HAP-1 (cell line): ENCODE measurements at regions of chr11 and their contacts with region 1.

Region 1: DNA sequence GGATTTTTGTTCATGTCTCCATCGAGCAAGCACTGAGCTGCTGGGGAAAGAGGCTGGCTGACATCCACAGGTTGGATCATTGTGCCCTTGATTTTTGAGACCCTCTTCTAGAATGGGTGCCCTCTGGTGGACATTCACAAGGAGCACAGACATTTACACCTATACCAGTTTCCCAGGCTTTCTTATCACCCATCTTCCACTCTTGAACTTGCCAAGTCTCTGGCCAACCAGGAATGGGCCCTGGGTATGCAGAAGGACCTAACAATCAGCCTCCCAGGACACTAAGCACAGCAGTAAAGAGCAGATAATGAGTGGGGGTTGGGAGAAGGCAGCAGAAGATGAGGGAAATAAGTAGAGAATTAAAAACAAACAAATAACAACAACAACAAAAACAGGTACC is 5.7 kb upstream of the INTS4 start:
- DNase-seq: peak; percentile 68 to 82
- H3K4me3 ChIP-seq: no peak overlapping the region
- H3K4me1 ChIP-seq: peaks cover 3% of the 10 kb centered on the region
- H3K27me3 ChIP-seq: no peaks in the 10 kb centered on the region

Region 2: GRCh38 chr11:77776455-77776854 is 223.7 kb before region 1 on chr11:
- in situ Hi-C with region 1: loop called (anchors 10 kb)
- DNase-seq: peak in 1 of 2 experiments; percentile 28
- H3K4me3 ChIP-seq: no peak overlapping the region
- H3K4me1 ChIP-seq: no peaks in the 10 kb centered on the region; the same call in 1 of the 2 replicates
- H3K27me3 ChIP-seq: no peaks in the 10 kb centered on the region

Region 3: DNA sequence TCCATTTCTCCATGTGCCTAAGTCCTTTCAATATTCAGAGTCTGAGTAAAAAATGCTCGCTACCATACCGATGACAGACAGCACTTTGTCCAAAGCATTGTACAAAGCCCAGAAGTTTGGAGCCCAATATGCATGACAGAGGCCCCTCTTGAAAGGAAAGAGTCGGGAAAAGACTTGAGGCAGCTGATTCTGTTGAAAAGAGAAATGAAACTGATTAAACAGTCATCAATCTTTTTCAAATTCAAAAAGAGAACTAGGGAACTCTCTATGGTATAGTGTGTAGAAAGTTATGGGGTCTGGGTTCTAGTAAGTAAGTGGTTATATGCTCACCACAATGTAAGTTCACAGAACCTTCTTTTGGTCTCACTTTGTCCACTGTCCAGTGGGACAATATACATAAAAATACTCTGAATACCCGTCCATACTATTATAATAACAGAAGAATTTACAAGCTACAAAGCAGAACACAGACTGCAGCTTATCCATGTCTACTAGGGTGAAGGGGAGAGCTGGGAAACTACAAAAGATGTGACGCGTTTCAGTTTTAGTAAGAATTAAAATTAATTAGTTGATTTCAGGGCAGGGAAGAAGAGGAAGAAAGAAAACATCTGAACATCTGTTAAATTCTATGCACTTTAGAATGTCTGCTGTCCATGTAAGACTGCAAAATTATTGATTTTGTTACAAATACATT is 112.5 kb after region 1 on chr11:
- in situ Hi-C with region 1: no loop called
- DNase-seq: peak; percentile 82 to 100
- H3K4me3 ChIP-seq: no peak overlapping the region
- H3K4me1 ChIP-seq: peaks cover 37% of the 10 kb centered on the region
- H3K27me3 ChIP-seq: no peaks in the 10 kb centered on the region